ENCODE measurements at regions of chr9 and their contacts with region 1.

Region 1: GRCh38 chr9:33623658-33624586 is 99.9 kb downstream of the ANKRD18B start:
- DNase-seq: peak; percentile 71
- H3K4me3 Mint-ChIP-seq: no peak overlapping the region
- H3K27ac Mint-ChIP-seq: no peak overlapping the region
- H3K4me1 Mint-ChIP-seq: peaks cover 7% of the 10 kb centered on the region
- H3K27me3 Mint-ChIP-seq: peaks cover 46% of the 10 kb centered on the region

Region 2: DNA sequence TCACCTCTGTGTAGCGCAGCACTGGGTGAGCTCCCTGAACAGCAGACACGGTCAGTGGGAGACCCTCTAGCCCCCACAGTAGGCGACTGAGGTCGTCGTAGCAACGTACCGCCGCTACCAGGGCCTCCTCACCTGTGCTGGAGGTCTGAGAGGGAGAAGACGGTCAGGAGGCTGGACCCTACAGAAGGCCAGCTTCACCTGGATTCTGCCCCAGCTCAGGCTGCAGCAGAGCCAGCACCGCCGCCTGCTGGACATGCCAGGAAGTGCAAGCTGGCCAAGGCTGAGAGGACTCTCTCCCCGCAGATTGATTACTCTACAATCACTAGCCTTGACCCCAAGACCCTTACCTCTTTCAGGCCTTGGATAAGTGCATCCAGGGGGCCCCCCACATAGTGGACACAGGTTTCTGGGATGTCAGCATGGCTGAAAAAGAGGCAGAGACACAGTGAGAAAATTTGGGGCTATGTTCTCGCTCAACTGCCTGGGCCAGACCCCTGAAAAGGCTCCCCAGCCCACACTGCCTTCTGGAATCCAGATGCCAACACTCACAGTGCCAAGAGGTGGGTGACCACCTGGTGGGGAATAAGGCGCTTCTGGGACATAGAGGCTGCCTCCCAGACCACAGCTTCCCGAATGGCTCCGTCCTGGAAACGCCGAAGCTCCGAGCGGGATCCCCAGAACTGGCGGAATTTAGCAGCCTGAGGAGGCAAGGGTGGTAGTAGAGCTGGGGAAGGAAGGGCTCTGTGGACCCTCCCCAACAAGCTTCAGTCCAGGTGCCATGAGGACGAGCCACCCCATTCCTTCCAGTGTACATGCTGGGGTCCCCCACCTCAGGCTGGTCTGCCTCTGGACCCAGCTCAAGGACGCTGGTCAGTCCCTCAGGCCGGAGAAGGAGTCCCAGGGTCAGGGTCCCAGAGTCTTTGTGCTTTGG is 157.1 kb before region 1 on chr9:
- CTCF ChIA-PET with region 1: no interaction called
- POLR2A ChIA-PET with region 1: no interaction called
- DNase-seq: peak; percentile 79
- H3K4me3 Mint-ChIP-seq: no peak overlapping the region
- H3K27ac Mint-ChIP-seq: no peak overlapping the region
- H3K4me1 Mint-ChIP-seq: peaks cover 9% of the 10 kb centered on the region
- H3K27me3 Mint-ChIP-seq: no peaks in the 10 kb centered on the region

Region 3: GRCh38 chr9:33611358-33611757 is 12.6 kb before region 1 on chr9:
- CTCF ChIA-PET with region 1: interaction called, 11 read pairs
- POLR2A ChIA-PET with region 1: no interaction called
- DNase-seq: no peak
- H3K4me3 Mint-ChIP-seq: no peak overlapping the region
- H3K27ac Mint-ChIP-seq: no peak overlapping the region
- H3K4me1 Mint-ChIP-seq: no peaks in the 10 kb centered on the region
- H3K27me3 Mint-ChIP-seq: peaks cover 51% of the 10 kb centered on the region

Region 4: GRCh38 chr9:33695856-33696255 is 71.9 kb after region 1 on chr9:
- CTCF ChIA-PET with region 1: interaction called, 10 read pairs
- POLR2A ChIA-PET with region 1: no interaction called
- DNase-seq: no peak
- H3K4me3 Mint-ChIP-seq: no peak overlapping the region
- H3K27ac Mint-ChIP-seq: no peak overlapping the region
- H3K4me1 Mint-ChIP-seq: peaks cover 3% of the 10 kb centered on the region
- H3K27me3 Mint-ChIP-seq: peaks cover 33% of the 10 kb centered on the region

Region 5: GRCh38 chr9:33721674-33722358 is 97.9 kb after region 1 on chr9:
- CTCF ChIA-PET with region 1: interaction called, 248 read pairs
- POLR2A ChIA-PET with region 1: interaction called, 3 read pairs
- DNase-seq: peak; percentile 88
- H3K4me3 Mint-ChIP-seq: no peak overlapping the region
- H3K27ac Mint-ChIP-seq: no peak overlapping the region
- H3K4me1 Mint-ChIP-seq: peaks cover 1% of the 10 kb centered on the region
- H3K27me3 Mint-ChIP-seq: peaks cover 31% of the 10 kb centered on the region

Region 6: GRCh38 chr9:33778700-33779351 is 154.9 kb after region 1 on chr9:
- CTCF ChIA-PET with region 1: interaction called, 18 read pairs
- POLR2A ChIA-PET with region 1: no interaction called
- DNase-seq: peak; percentile 54
- H3K4me3 Mint-ChIP-seq: no peak overlapping the region
- H3K27ac Mint-ChIP-seq: no peak overlapping the region
- H3K4me1 Mint-ChIP-seq: no peaks in the 10 kb centered on the region
- H3K27me3 Mint-ChIP-seq: peaks cover 35% of the 10 kb centered on the region